ENCODE measurements at regions of chr12 and their contacts with region 1.

Region 1: GRCh38 chr12:2890388-2891239 is at the start of gene TULP3:
- DNase-seq: peak; percentile 98
- ATAC-seq: peak; percentile 98
- H3K4me3 Mint-ChIP-seq: peak within 1 kb of the TSS; percentile 85
- H3K27ac Mint-ChIP-seq: peak within 1 kb of the TSS; percentile 79
- H3K4me1 Mint-ChIP-seq: peaks cover 25% of the 10 kb centered on the region
- H3K27me3 Mint-ChIP-seq: no peaks in the 10 kb centered on the region
- total RNA-seq, gene TULP3: 5.9 to 7.3 TPM

Region 2: GRCh38 chr12:2535583-2536204 is 354.9 kb before region 1 on chr12:
- CTCF ChIA-PET with region 1: no interaction called
- POLR2A ChIA-PET with region 1: no interaction called
- intact Hi-C with region 1: no loop called
- DNase-seq: no peak
- ATAC-seq: no peak
- H3K4me3 Mint-ChIP-seq: no peak overlapping the region
- H3K27ac Mint-ChIP-seq: no peak overlapping the region
- H3K4me1 Mint-ChIP-seq: no peaks in the 10 kb centered on the region
- H3K27me3 Mint-ChIP-seq: no peaks in the 10 kb centered on the region

Region 3: DNA sequence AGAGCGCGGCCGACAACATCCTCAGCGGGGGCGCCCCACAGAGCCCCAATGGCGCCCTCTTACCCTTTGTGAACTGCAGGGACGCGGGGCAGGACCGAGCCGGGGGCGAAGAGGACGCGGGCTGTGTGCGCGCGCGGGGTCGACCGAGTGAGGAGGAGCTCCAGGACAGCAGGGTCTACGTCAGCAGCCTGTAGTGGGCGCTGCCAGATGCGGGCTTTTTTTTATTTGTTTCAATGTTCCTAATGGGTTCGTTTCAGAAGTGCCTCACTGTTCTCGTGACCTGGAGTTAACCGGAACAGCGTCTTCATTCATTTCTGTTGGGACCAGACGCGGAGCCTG is 199.6 kb before region 1 on chr12:
- CTCF ChIA-PET with region 1: no interaction called
- POLR2A ChIA-PET with region 1: no interaction called
- intact Hi-C with region 1: loop called in 1 of 2 experiments (anchors 1 kb)
- DNase-seq: peak; percentile 76
- ATAC-seq: peak; percentile 66
- H3K4me3 Mint-ChIP-seq: peak overlapping the region; percentile 79
- H3K27ac Mint-ChIP-seq: peak overlapping the region; percentile 79
- H3K4me1 Mint-ChIP-seq: peaks cover 26% of the 10 kb centered on the region
- H3K27me3 Mint-ChIP-seq: peaks cover 5% of the 10 kb centered on the region

Region 4: DNA sequence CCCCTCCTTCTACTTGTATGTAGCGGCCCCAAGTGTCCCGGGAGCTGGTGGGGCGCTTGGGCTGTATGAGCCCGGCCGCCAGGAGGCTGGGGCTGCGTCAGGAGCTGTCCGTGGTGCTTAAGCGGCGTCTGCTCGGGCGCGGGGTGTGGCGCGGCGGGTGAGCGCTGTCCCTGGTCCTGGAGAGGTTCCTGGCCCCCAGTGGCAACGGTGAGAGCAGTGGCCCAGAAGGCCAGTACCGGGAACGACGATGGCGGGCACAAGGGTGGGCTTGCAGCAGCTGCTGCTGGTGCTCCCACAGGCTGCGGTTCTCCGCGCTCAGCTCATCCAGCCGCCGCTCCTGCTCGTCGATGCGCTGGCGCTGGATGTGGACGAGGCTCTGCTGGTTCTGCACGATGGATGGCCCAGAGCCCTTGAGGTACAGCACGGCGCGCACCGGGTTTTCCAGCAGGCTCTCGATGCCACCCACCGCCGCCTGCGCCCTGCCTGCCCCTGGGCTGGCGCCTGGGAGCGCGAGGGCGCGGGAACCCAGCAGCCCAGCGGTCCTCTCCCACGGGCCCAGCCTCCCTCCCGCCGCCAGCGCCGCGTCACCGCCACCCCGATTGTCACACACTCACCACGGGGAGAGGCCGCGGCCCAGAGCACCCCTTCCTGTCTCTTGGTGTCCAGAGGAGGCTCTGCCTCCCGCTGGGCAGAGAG is 137.8 kb before region 1 on chr12:
- CTCF ChIA-PET with region 1: no interaction called
- POLR2A ChIA-PET with region 1: no interaction called
- intact Hi-C with region 1: loop called in 1 of 2 experiments (anchors 1 kb)
- DNase-seq: peak; percentile 92
- ATAC-seq: peak; percentile 99
- H3K4me3 Mint-ChIP-seq: no peak overlapping the region
- H3K27ac Mint-ChIP-seq: no peak overlapping the region
- H3K4me1 Mint-ChIP-seq: no peaks in the 10 kb centered on the region
- H3K27me3 Mint-ChIP-seq: peaks cover 22% of the 10 kb centered on the region

Region 5: GRCh38 chr12:2794736-2795289 is 95.8 kb before region 1 on chr12 and contains the start of gene FKBP4:
- CTCF ChIA-PET with region 1: no interaction called
- POLR2A ChIA-PET with region 1: no interaction called
- intact Hi-C with region 1: loop called in 1 of 2 experiments (anchors 1 kb)
- DNase-seq: peak; percentile 95
- ATAC-seq: peak; percentile 90
- H3K4me3 Mint-ChIP-seq: peak within 1 kb of the TSS; percentile 90
- H3K27ac Mint-ChIP-seq: peak within 1 kb of the TSS; percentile 67
- H3K4me1 Mint-ChIP-seq: peaks cover 20% of the 10 kb centered on the region
- H3K27me3 Mint-ChIP-seq: no peaks in the 10 kb centered on the region
- total RNA-seq, gene FKBP4: 129 to 182 TPM

Region 6: DNA sequence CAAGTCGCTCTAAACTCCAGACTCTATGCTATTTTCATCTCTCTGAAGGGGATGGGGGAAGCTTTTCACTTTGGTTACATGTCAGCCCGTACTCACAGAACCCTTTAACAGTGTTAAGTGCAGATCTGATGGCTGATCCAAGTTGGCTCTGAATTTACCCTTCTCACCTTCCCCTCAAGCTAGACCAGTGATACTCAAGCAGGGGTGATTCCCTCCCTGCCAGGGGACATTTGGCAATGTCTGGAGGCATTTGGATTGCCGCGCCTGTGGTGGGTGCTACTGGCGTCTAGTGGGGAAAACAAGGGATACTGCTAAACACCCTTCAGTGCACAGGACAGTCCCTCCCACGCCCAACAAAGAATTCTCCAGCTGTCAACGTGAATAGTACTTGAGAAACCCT is 27.7 kb before region 1 on chr12:
- CTCF ChIA-PET with region 1: interaction called, 4 read pairs
- POLR2A ChIA-PET with region 1: no interaction called
- intact Hi-C with region 1: loop called in 1 of 2 experiments (anchors 1 kb)
- DNase-seq: no peak
- ATAC-seq: no peak
- H3K4me3 Mint-ChIP-seq: no peak overlapping the region
- H3K27ac Mint-ChIP-seq: no peak overlapping the region
- H3K4me1 Mint-ChIP-seq: peaks cover 2% of the 10 kb centered on the region
- H3K27me3 Mint-ChIP-seq: no peaks in the 10 kb centered on the region

Region 7: DNA sequence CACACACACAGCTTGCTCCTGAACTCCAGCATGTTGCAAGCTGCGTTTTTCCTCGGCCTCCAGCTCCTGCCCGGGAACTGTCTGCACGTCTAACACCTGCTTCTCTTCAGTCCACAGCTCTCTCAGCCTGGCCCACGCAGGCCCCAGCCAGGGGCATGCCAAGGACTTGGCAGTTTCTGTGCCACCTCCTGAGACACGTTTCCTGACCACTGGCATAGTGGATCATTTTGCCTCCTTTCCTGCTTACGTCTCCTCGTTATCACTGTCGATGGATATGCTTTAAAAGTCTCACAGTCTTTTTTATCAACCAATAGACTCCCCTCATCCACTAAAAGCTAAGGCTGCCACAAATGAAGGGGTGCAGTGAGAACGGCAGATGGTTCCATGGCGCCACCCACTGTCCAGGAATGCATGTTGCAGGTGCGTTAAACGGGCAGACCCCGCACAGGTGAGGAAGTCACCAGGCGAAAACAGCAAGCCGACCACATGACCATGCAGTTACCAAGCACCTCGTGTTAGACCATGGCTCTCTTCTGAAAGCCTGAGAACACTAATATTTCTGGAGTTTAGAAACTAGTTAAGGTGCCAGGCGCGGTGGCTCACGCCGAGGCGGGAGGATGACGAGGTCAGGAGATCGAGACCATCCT is 53.9 kb after region 1 on chr12:
- CTCF ChIA-PET with region 1: interaction called, 6 read pairs
- POLR2A ChIA-PET with region 1: no interaction called
- intact Hi-C with region 1: loop called (anchors 1 to 2 kb)
- DNase-seq: peak; percentile 83
- ATAC-seq: peak; percentile 86
- H3K4me3 Mint-ChIP-seq: no peak overlapping the region
- H3K27ac Mint-ChIP-seq: no peak overlapping the region
- H3K4me1 Mint-ChIP-seq: no peaks in the 10 kb centered on the region
- H3K27me3 Mint-ChIP-seq: peaks cover 3% of the 10 kb centered on the region

Region 8: DNA sequence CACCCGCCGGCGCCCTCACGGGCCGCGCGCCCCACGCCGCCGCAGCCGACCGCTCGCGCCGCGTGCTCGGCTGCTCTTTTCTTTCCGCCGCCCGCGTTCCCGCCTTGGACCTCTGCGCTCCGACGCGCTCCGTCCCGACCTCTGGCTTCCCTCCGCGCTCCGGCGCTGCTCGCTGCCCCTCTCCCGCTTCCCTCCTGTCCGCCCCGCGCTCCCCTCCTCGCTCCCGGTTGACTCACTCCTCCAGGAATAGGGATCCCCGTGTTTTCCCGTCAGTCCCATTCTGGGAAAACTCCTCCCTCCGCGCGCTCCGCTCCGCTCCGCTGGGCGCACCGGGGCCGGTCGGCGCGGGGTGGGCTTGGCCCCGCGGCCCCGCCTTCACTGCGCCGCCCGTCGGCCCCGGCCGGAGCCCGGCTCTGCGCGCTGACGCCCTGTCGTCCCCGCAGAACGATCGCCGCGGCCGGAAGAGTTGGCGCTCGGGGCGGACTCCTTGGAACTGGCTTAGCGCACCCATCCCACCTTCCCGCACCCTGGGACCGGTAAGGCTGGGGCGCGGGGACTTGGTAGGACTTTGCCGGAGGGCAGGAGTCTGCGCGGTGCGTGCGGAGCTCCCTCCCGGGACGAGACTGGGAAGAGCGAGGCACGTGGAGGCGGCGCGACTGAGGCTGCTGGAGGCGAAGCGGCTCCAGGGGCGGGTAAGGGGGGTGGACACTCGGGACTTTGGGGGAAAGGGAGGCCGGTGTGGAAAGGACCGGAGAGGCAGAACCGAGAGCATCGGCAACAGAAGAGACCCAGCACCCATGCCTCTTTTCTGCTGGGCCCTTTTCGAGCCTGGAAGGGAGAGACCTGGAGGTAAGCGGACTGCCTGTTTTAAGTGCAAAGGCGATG is 69.1 kb after region 1 on chr12:
- CTCF ChIA-PET with region 1: no interaction called
- POLR2A ChIA-PET with region 1: interaction called, 3 read pairs
- intact Hi-C with region 1: loop called in 1 of 2 experiments (anchors 2 kb)
- DNase-seq: peak; percentile 51
- ATAC-seq: peak; percentile 23
- H3K4me3 Mint-ChIP-seq: peak overlapping the region; percentile 61
- H3K27ac Mint-ChIP-seq: peak overlapping the region; percentile 49
- H3K4me1 Mint-ChIP-seq: peaks cover 18% of the 10 kb centered on the region
- H3K27me3 Mint-ChIP-seq: peaks cover 54% of the 10 kb centered on the region